MCF 10A (cell line): ENCODE measurements at regions of chr2 and their contacts with region 1.

Region 1: DNA sequence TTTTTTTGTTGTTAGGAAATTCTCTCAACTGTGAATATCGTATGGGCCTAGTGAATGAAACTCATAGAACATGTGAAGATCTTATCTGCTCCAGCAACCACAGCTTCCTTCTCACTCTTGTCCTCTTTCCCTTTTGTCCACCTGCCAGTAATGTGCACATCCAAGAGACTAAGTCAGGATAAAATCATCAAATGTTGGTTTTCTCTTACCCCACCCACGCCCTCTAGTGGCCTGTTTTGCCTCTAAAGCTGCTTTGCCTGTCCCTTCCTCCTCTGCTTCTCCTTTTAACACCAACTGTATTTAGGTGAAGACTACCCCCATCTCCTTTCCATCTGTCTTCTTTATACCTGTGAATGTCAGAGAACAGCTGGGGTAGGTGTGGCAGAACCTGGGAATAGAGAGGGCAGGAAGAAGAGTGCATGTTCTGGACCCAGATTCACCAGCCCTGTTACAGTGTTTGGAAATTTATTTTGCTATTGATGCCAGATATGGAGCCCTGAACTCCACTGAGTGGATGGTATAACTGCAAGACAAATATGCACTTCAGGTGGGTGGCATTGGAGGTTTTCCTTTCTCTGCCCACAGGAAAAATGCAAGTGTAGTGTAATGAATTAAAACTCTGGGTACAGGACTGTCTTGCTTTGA is 8.4 kb upstream of the MGAT5 start:
- DNase-seq: peak; percentile 70
- H3K4me3 Mint-ChIP-seq: no peak overlapping the region
- H3K27ac Mint-ChIP-seq: no peak overlapping the region
- H3K4me1 Mint-ChIP-seq: peaks cover 6% of the 10 kb centered on the region
- H3K27me3 Mint-ChIP-seq: no peaks in the 10 kb centered on the region
- CTCF ChIP-seq: peak; percentile 75

Region 2: GRCh38 chr2:134137182-134137611 is 108.3 kb before region 1 on chr2:
- CTCF ChIA-PET with region 1: interaction called, 16 read pairs
- POLR2A ChIA-PET with region 1: no interaction called
- intact Hi-C with region 1: no loop called
- DNase-seq: peak; percentile 81
- H3K4me3 Mint-ChIP-seq: peak overlapping the region; percentile 31
- H3K27ac Mint-ChIP-seq: peak overlapping the region; percentile 75
- H3K4me1 Mint-ChIP-seq: peaks cover 42% of the 10 kb centered on the region
- H3K27me3 Mint-ChIP-seq: no peaks in the 10 kb centered on the region
- CTCF ChIP-seq: no peak

Region 3: GRCh38 chr2:134207564-134208209 is 37.8 kb before region 1 on chr2:
- CTCF ChIA-PET with region 1: interaction called, 8 read pairs
- POLR2A ChIA-PET with region 1: no interaction called
- intact Hi-C with region 1: loop called (anchors 5 kb)
- DNase-seq: peak; percentile 69
- H3K4me3 Mint-ChIP-seq: no peak overlapping the region
- H3K27ac Mint-ChIP-seq: no peak overlapping the region
- H3K4me1 Mint-ChIP-seq: peaks cover 11% of the 10 kb centered on the region
- H3K27me3 Mint-ChIP-seq: no peaks in the 10 kb centered on the region
- CTCF ChIP-seq: peak; percentile 73

Region 4: GRCh38 chr2:134232868-134233727 is 12.4 kb before region 1 on chr2:
- CTCF ChIA-PET with region 1: interaction called, 19 read pairs
- POLR2A ChIA-PET with region 1: no interaction called
- intact Hi-C with region 1: no loop called
- DNase-seq: no peak
- H3K4me3 Mint-ChIP-seq: no peak overlapping the region
- H3K27ac Mint-ChIP-seq: no peak overlapping the region
- H3K4me1 Mint-ChIP-seq: peaks cover 6% of the 10 kb centered on the region
- H3K27me3 Mint-ChIP-seq: no peaks in the 10 kb centered on the region
- CTCF ChIP-seq: no peak

Region 5: GRCh38 chr2:134411828-134412638 is 166.6 kb after region 1 on chr2:
- CTCF ChIA-PET with region 1: interaction called, 35 read pairs
- POLR2A ChIA-PET with region 1: no interaction called
- intact Hi-C with region 1: loop called (anchors 1 kb)
- DNase-seq: peak; percentile 66
- H3K4me3 Mint-ChIP-seq: no peak overlapping the region
- H3K27ac Mint-ChIP-seq: no peak overlapping the region
- H3K4me1 Mint-ChIP-seq: peaks cover 23% of the 10 kb centered on the region
- H3K27me3 Mint-ChIP-seq: no peaks in the 10 kb centered on the region
- CTCF ChIP-seq: peak; percentile 54

Region 6: GRCh38 chr2:134727385-134727784 is 481.9 kb after region 1 on chr2:
- CTCF ChIA-PET with region 1: no interaction called
- POLR2A ChIA-PET with region 1: no interaction called
- intact Hi-C with region 1: no loop called
- DNase-seq: peak; percentile 31
- H3K4me3 Mint-ChIP-seq: no peak overlapping the region
- H3K27ac Mint-ChIP-seq: no peak overlapping the region
- H3K4me1 Mint-ChIP-seq: no peaks in the 10 kb centered on the region
- H3K27me3 Mint-ChIP-seq: no peaks in the 10 kb centered on the region
- CTCF ChIP-seq: no peak

Region 7: DNA sequence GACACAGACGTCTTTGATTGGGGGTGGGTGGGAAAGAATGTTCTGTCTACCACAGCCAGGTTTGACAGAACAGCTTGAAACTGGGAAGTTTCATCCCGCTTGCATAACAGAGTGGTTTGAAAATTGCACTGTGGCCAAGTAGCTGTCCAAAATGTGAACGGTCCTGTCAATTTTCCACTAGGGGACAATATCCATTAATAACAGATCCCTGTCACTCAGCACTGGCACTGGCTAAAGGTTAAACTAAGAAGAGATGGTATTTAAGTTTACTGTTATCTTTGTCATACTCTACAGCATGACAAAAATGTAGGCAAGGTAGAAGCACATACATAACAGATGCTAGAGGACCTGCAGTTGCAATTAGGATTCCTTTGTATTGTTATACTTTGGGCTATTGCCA is 537.3 kb after region 1 on chr2:
- CTCF ChIA-PET with region 1: no interaction called
- POLR2A ChIA-PET with region 1: no interaction called
- intact Hi-C with region 1: no loop called
- DNase-seq: no peak
- H3K4me3 Mint-ChIP-seq: no peak overlapping the region
- H3K27ac Mint-ChIP-seq: no peak overlapping the region
- H3K4me1 Mint-ChIP-seq: no peaks in the 10 kb centered on the region
- H3K27me3 Mint-ChIP-seq: no peaks in the 10 kb centered on the region
- CTCF ChIP-seq: no peak